Activated naive CD4-positive, alpha-beta T cell treated with anti-CD3 and anti-CD28 coated beads for 36 hours (primary cell): ENCODE measurements at regions of chr6 and their contacts with region 1.

Region 1: DNA sequence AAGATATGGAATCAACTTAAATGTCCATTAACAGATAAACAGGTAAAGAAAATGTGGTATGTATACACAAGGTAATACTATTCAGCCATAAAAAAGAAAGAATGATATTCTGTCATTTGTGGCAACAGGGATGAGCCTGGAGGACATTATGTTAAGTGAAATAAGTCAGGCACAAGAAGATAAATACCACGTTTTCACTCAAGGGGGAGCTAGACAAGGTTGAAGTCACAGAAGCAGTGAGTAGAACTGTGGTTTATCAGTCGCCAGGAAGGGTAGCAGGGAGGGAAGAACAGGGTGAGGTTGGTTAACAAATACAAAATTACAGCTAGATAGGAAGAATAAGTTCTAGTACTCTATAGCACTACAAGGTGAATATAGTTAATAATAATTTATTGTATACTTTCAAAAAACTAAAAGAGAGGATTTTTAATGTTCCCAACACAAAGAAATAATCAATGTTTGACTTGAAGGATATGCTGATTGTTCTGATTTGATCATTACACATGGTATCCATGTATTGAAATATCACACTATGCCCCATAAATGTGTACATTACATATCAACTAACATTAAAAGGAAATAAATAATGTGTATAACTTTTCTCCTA is 21.1 kb downstream of the RTN4IP1 start:
- DNase-seq: peak; percentile 24
- H3K4me3 Mint-ChIP-seq: no peak overlapping the region
- H3K27ac Mint-ChIP-seq: no peak overlapping the region
- H3K4me1 Mint-ChIP-seq: peaks cover 8% of the 10 kb centered on the region
- H3K27me3 Mint-ChIP-seq: no peaks in the 10 kb centered on the region

Region 2: GRCh38 chr6:106715922-106716321 is 107.8 kb after region 1 on chr6:
- CTCF ChIA-PET with region 1: no interaction called
- intact Hi-C with region 1: no loop called
- DNase-seq: no peak
- H3K4me3 Mint-ChIP-seq: no peak overlapping the region
- H3K27ac Mint-ChIP-seq: no peak overlapping the region
- H3K4me1 Mint-ChIP-seq: no peaks in the 10 kb centered on the region
- H3K27me3 Mint-ChIP-seq: peaks cover 13% of the 10 kb centered on the region

Region 3: GRCh38 chr6:106979427-106979884 is 371.3 kb after region 1 on chr6:
- CTCF ChIA-PET with region 1: interaction called, 7 read pairs
- intact Hi-C with region 1: loop called (anchors 1 kb)
- DNase-seq: peak; percentile 87
- H3K4me3 Mint-ChIP-seq: no peak overlapping the region
- H3K27ac Mint-ChIP-seq: no peak overlapping the region
- H3K4me1 Mint-ChIP-seq: no peaks in the 10 kb centered on the region
- H3K27me3 Mint-ChIP-seq: peaks cover 33% of the 10 kb centered on the region

Region 4: DNA sequence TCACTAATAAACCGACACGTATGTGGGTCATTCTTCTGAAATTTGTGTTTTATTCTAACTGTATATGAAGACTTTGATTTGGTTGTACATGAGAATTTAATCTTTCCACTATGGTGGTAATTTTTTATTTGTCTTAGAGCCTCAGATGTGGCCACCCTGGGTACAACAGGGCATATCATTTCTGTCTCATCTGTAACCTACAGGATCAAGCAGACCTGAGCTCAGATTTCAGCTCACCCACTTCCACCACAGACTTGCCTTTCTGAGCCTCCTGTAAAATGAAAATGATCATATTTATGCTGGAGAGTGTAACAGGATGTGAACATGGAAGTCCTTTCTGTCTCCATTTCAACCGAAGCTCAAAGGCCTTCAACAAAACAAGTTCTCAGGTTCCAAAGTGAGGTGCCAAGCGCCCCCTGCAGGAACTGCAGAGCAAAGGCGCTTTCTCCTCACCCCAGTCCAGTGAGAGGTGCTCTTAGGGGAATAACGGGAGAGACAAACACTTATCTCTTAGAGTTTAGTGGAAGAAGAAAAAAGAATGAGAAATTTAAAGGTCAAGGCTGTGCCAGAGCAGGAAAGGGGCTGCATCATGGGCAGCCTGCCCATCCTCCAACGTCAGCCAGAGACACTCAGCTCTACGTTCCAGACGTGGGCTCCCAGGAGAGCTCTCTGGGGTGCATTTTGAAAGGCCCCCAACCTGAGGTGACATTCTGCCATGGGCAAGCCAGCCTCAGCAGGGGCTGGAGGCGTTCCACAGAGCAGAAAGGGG is 389.4 kb after region 1 on chr6:
- CTCF ChIA-PET with region 1: interaction called, 4 read pairs
- intact Hi-C with region 1: loop called (anchors 5 kb)
- DNase-seq: peak; percentile 75
- H3K4me3 Mint-ChIP-seq: no peak overlapping the region
- H3K27ac Mint-ChIP-seq: no peak overlapping the region
- H3K4me1 Mint-ChIP-seq: peaks cover 3% of the 10 kb centered on the region
- H3K27me3 Mint-ChIP-seq: no peaks in the 10 kb centered on the region

Region 5: DNA sequence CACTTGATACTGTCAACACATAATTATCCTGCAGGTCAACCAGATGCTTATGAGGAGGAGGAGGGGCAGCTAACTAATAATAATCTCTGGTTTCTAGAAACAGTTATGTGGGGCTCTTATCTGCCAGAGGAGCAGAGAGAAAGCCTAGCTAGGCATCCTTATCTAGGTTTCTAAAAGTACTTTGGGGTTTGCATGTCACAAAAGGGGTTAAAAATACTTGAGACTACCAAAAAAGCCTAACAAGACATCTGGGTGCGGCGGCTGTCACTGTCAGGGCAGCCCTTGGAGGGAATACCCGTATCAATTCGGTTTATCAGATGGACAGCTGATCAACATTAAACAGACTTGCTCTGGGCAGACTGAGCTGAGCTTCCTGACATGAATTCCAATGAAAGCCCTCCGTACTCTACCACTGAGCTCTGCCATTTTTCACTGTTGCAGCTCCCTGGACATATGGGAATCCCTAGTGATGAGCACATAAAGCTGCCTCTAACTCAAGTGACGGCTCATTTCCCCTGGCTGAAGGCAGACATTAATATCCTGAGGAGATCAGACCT is 684.6 kb after region 1 on chr6:
- CTCF ChIA-PET with region 1: no interaction called
- intact Hi-C with region 1: no loop called
- DNase-seq: no peak
- H3K4me3 Mint-ChIP-seq: no peak overlapping the region
- H3K27ac Mint-ChIP-seq: no peak overlapping the region
- H3K4me1 Mint-ChIP-seq: peaks cover 2% of the 10 kb centered on the region
- H3K27me3 Mint-ChIP-seq: no peaks in the 10 kb centered on the region